ENCODE measurements at regions of chr16 and their contacts with region 1.

Region 1: GRCh38 chr16:58198022-58198683 is at the start of gene CSNK2A2:
- DNase-seq: no peak
- ATAC-seq: peak; percentile 90
- H3K4me3 ChIP-seq: peak within 1 kb of the TSS; percentile 95
- H3K27ac ChIP-seq: peak within 1 kb of the TSS; percentile 69
- H3K4me1 ChIP-seq: peaks cover 4% of the 10 kb centered on the region
- H3K27me3 ChIP-seq: no peaks in the 10 kb centered on the region
- CTCF ChIP-seq: peak; percentile 21 to 65 (median 40); a peak in 4 of 6 replicates
- EP300 ChIP-seq: no peak
- POLR2A ChIP-seq: peak; percentile 57; the same call in 1 of the 2 replicates
- RAD21 ChIP-seq: no peak
- polyA plus RNA-seq, gene CSNK2A2: 17.4 to 18.0 TPM

Region 2: GRCh38 chr16:57475711-57476339 is 722.3 kb before region 1 on chr16:
- CTCF ChIA-PET with region 1: no interaction called
- POLR2A ChIA-PET with region 1: no interaction called
- RAD21 ChIA-PET with region 1: no interaction called
- SMC1A ChIA-PET with region 1: no interaction called
- in situ Hi-C with region 1: no loop called
- intact Hi-C with region 1: no loop called
- DNase-seq: no peak
- ATAC-seq: peak; percentile 96
- H3K4me3 ChIP-seq: no peak overlapping the region
- H3K27ac ChIP-seq: no peak overlapping the region
- H3K4me1 ChIP-seq: peaks cover 16% of the 10 kb centered on the region
- H3K27me3 ChIP-seq: no peaks in the 10 kb centered on the region
- CTCF ChIP-seq: peak; percentile 43 to 75 (median 73)
- EP300 ChIP-seq: no peak
- POLR2A ChIP-seq: no peak
- RAD21 ChIP-seq: peak; percentile 54

Region 3: DNA sequence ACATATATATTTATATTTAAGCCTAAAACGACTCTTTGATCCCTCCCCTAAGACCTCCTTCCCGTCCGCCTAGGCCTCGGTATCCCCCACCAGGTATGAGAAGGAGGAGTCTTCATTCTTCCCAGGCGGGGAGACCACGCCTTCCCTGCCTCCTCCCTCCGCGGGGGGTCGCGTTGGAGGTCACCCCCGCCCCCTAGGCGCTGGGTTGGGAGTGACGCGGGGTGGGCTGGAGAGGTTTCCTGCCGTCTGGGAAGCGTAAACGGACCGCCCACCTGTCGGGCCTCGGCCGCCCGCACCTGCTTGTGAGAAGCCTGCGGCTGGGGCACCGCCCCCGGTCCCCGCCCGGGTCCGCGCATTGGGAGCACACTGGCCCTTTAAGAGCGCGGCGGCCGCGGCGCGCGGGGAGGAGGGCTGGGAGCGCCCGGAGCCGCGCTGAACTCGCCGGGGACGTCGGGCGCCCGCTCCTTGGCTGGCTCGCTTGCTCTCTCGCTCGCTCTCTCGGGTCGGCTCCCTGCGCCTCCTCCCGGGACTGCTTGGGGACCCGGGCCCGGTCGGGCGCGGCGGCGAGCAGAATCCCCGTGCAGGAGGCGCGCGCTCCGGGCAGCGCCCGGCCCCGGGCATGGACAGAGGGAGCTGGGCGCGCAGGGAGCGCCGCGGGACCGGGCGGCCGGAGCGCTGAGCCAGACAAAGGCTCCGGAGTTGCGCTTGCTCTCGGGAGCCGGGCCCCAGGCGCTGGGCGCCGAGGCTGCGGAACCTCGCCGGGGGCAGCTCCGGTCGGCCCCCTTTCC is 172.6 kb before region 1 on chr16 and contains the start of gene MMP15:
- CTCF ChIA-PET with region 1: no interaction called
- POLR2A ChIA-PET with region 1: no interaction called
- RAD21 ChIA-PET with region 1: interaction called, 4 read pairs
- SMC1A ChIA-PET with region 1: interaction called, 3 read pairs
- in situ Hi-C with region 1: no loop called
- intact Hi-C with region 1: loop called (anchors 10 kb)
- DNase-seq: no peak
- ATAC-seq: peak; percentile 80
- H3K4me3 ChIP-seq: peak within 1 kb of the TSS; percentile 67
- H3K27ac ChIP-seq: no peak within 1 kb of the TSS
- H3K4me1 ChIP-seq: no peaks in the 10 kb centered on the region; the same call in 1 of the 2 replicates
- H3K27me3 ChIP-seq: peaks cover 11 to 13% of the 10 kb centered on the region in 2 experiments
- CTCF ChIP-seq: no peak
- EP300 ChIP-seq: no peak
- POLR2A ChIP-seq: no peak
- RAD21 ChIP-seq: no peak
- polyA plus RNA-seq, gene MMP15: not detected

Region 4: DNA sequence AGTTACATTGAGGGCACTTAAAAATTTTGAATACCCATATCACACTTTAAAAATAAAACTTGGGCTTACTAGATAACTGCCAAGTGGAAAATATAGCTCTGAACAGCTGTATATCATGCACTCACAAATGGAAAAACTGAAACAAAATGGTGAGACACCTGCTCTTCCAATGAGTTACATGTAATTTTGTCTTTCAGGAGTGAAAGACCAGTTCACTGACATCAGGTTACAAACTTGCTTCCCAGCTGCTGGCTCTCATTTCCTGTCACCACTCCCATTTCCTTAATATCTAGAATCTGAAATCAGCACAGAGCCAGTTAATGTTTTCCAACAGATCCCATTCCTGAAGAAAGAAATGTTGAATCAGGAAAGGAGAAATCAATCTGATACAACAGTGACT is 11.1 kb before region 1 on chr16:
- CTCF ChIA-PET with region 1: interaction called, 6 read pairs
- POLR2A ChIA-PET with region 1: no interaction called
- RAD21 ChIA-PET with region 1: interaction called, 3 read pairs
- SMC1A ChIA-PET with region 1: interaction called, 16 read pairs
- in situ Hi-C with region 1: no loop called
- intact Hi-C with region 1: no loop called
- DNase-seq: no peak
- ATAC-seq: no peak
- H3K4me3 ChIP-seq: no peak overlapping the region
- H3K27ac ChIP-seq: no peak overlapping the region
- H3K4me1 ChIP-seq: no peaks in the 10 kb centered on the region
- H3K27me3 ChIP-seq: no peaks in the 10 kb centered on the region
- CTCF ChIP-seq: no peak
- EP300 ChIP-seq: no peak
- POLR2A ChIP-seq: no peak
- RAD21 ChIP-seq: no peak

Region 5: GRCh38 chr16:58243528-58244004 is 45.4 kb after region 1 on chr16:
- CTCF ChIA-PET with region 1: interaction called, 30 read pairs
- POLR2A ChIA-PET with region 1: interaction called, 9 read pairs
- RAD21 ChIA-PET with region 1: interaction called, 34 read pairs
- SMC1A ChIA-PET with region 1: interaction called, 35 read pairs
- in situ Hi-C with region 1: no loop called
- intact Hi-C with region 1: loop called (anchors 1 kb)
- DNase-seq: peak; percentile 91
- ATAC-seq: peak; percentile 90
- H3K4me3 ChIP-seq: peak overlapping the region; percentile 52; the same call in 1 of the 2 replicates
- H3K27ac ChIP-seq: peak overlapping the region; percentile 81
- H3K4me1 ChIP-seq: peaks cover 32% of the 10 kb centered on the region
- H3K27me3 ChIP-seq: no peaks in the 10 kb centered on the region
- CTCF ChIP-seq: peak; percentile 15 to 27 (median 25); a peak in 4 of 6 replicates
- EP300 ChIP-seq: peak; percentile 96 to 100
- POLR2A ChIP-seq: 0 out of 2 replicates have a peak, but pooled peaks have one; percentile 22
- RAD21 ChIP-seq: peak; percentile 28; the same call in 1 of the 2 replicates

Region 6: GRCh38 chr16:58249780-58250478 is 51.8 kb after region 1 on chr16:
- CTCF ChIA-PET with region 1: interaction called, 30 read pairs
- POLR2A ChIA-PET with region 1: interaction called, 4 read pairs
- RAD21 ChIA-PET with region 1: interaction called, 34 read pairs
- SMC1A ChIA-PET with region 1: interaction called, 35 read pairs
- in situ Hi-C with region 1: no loop called
- intact Hi-C with region 1: loop called (anchors 1 kb)
- DNase-seq: peak; percentile 40
- ATAC-seq: peak; percentile 86
- H3K4me3 ChIP-seq: peak overlapping the region; percentile 84
- H3K27ac ChIP-seq: 0 out of 2 replicates have a peak overlapping the region, but pooled peaks have one; percentile 1
- H3K4me1 ChIP-seq: peaks cover 18% of the 10 kb centered on the region
- H3K27me3 ChIP-seq: no peaks in the 10 kb centered on the region
- CTCF ChIP-seq: no peak
- EP300 ChIP-seq: no peak
- POLR2A ChIP-seq: peak; percentile 78
- RAD21 ChIP-seq: no peak

Region 7: GRCh38 chr16:58264961-58265479 is 66.9 kb after region 1 on chr16:
- CTCF ChIA-PET with region 1: interaction called, 10 read pairs
- POLR2A ChIA-PET with region 1: no interaction called
- RAD21 ChIA-PET with region 1: no interaction called
- SMC1A ChIA-PET with region 1: interaction called, 3 read pairs
- in situ Hi-C with region 1: no loop called
- intact Hi-C with region 1: no loop called
- DNase-seq: no peak
- ATAC-seq: peak; percentile 50
- H3K4me3 ChIP-seq: no peak overlapping the region
- H3K27ac ChIP-seq: no peak overlapping the region
- H3K4me1 ChIP-seq: no peaks in the 10 kb centered on the region
- H3K27me3 ChIP-seq: no peaks in the 10 kb centered on the region
- CTCF ChIP-seq: no peak
- EP300 ChIP-seq: no peak
- POLR2A ChIP-seq: no peak
- RAD21 ChIP-seq: no peak

Region 8: DNA sequence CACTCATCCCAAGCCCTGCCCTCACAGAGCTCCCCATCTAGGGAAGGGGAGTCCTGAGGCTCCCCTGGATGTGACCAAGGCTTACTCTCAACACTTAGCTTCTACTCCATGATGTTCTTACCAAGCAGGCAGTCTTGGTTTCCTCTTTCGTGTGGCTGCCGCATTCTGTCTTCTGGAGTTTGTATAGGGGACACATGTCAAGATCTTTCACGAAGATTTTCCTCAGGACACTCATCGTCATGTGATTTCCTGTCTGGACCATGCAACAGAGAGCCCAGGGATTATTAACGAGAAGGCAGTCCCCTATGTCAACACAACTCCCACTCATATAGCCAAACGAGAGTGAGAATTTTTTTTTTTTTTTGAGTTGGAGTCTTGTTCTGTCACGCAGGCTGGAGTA is 86.3 kb after region 1 on chr16:
- CTCF ChIA-PET with region 1: no interaction called
- POLR2A ChIA-PET with region 1: no interaction called
- RAD21 ChIA-PET with region 1: no interaction called
- SMC1A ChIA-PET with region 1: no interaction called
- in situ Hi-C with region 1: no loop called
- intact Hi-C with region 1: no loop called
- DNase-seq: no peak
- ATAC-seq: no peak
- H3K4me3 ChIP-seq: no peak overlapping the region
- H3K27ac ChIP-seq: no peak overlapping the region
- H3K4me1 ChIP-seq: no peaks in the 10 kb centered on the region
- H3K27me3 ChIP-seq: no peaks in the 10 kb centered on the region
- CTCF ChIP-seq: no peak
- EP300 ChIP-seq: no peak
- POLR2A ChIP-seq: no peak
- RAD21 ChIP-seq: no peak

Region 9: DNA sequence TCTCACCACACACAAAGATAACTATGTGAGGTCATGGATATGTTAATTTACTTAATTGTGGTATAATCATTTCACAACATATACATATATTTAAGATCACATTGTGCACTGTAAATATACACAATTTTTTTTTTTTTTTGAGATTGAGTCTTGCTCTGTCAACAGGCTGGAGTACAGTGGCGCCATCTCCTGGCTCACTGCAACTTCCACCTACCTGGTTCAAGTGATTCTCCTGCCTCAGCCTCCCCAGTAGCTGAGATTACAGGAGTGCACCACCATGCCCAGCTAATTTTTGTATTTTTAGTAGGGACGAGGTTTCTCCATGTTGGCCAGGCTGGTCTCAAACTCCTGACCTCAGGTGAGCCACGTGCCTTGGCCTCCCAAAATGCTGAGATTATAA is 108.2 kb after region 1 on chr16:
- CTCF ChIA-PET with region 1: interaction called, 4 read pairs
- POLR2A ChIA-PET with region 1: no interaction called
- RAD21 ChIA-PET with region 1: interaction called, 4 read pairs
- SMC1A ChIA-PET with region 1: interaction called, 9 read pairs
- in situ Hi-C with region 1: no loop called
- intact Hi-C with region 1: loop called (anchors 2 kb)
- DNase-seq: no peak
- ATAC-seq: peak; percentile 71
- H3K4me3 ChIP-seq: no peak overlapping the region
- H3K27ac ChIP-seq: no peak overlapping the region
- H3K4me1 ChIP-seq: no peaks in the 10 kb centered on the region
- H3K27me3 ChIP-seq: no peaks in the 10 kb centered on the region
- CTCF ChIP-seq: peak; percentile 46 to 67 (median 54)
- EP300 ChIP-seq: no peak
- POLR2A ChIP-seq: no peak
- RAD21 ChIP-seq: peak; percentile 59